ENCODE measurements at regions of chr12 and their contacts with region 1.

Region 1: GRCh38 chr12:105843986-105844760 is 294.6 kb downstream of the NUAK1 start:
- DNase-seq: no peak
- H3K4me3 ChIP-seq: no peak overlapping the region
- H3K27ac ChIP-seq: no peak overlapping the region
- H3K4me1 ChIP-seq: no peaks in the 10 kb centered on the region
- H3K27me3 ChIP-seq: no peaks in the 10 kb centered on the region
- CTCF ChIP-seq: no peak
- EP300 ChIP-seq: no peak
- POLR2A ChIP-seq: no peak

Region 2: DNA sequence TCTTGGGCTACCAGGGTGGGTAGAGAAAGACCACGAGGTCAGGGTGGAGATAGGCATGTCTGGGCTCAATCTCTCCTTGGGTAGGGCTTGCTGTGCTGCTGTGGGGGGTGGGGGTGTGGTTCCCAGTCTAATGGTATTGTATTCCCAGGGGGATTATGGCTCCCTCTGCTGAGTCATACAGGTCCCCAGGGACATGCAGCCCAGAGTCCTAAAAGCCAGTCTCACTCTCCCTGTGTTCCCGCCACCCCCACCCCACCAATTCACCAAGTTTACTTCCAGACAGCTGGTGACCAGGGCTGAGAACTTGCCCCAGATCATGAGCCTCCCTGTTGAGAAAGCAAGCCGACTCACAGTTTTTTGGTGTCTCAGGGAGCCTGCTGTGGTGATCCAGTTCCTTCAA is 146.1 kb before region 1 on chr12:
- intact Hi-C with region 1: no loop called
- DNase-seq: no peak
- H3K4me3 ChIP-seq: no peak overlapping the region
- H3K27ac ChIP-seq: no peak overlapping the region
- H3K4me1 ChIP-seq: no peaks in the 10 kb centered on the region
- H3K27me3 ChIP-seq: no peaks in the 10 kb centered on the region
- CTCF ChIP-seq: no peak
- EP300 ChIP-seq: no peak
- POLR2A ChIP-seq: no peak

Region 3: GRCh38 chr12:105820429-105821140 is 23.6 kb before region 1 on chr12:
- intact Hi-C with region 1: loop called in 1 of 4 experiments (anchors 1 kb)
- DNase-seq: peak in 4 of 5 donors; percentile 17 to 65 (median 33)
- H3K4me3 ChIP-seq: no peak overlapping the region
- H3K27ac ChIP-seq: no peak overlapping the region
- H3K4me1 ChIP-seq: peaks cover 2% of the 10 kb centered on the region
- H3K27me3 ChIP-seq: no peaks in the 10 kb centered on the region
- CTCF ChIP-seq: no peak
- EP300 ChIP-seq: no peak
- POLR2A ChIP-seq: no peak

Region 4: DNA sequence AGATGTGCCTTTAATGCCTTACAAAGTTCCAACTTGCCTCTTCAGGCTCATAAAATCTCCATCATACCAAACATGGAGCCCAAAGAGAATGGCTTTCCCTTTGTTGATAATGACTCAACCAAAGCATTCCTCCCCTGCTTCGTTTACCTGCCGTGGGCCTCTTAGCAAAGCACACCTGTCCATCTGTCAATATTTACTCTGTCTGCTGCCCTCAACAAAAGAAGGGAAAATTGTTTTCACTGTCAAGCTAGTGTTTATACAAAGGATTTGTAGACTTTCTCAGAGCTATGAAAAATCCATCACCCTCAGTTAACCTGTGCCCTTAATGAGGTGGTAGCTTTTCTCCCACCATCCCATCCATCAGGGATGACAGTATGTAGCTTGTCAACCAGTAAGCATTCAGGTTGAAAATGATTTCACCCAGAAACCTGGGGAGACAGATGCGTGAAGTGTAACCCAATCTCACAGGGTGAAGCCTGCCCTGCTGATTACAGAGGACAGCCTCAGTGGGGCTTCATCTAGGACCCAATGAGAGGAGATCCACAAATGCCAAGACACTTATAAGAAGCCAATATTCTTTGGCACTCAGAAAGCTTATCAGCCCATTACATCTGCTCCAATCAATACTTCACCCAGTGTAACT is 16.5 kb after region 1 on chr12:
- intact Hi-C with region 1: no loop called
- DNase-seq: no peak
- H3K4me3 ChIP-seq: no peak overlapping the region
- H3K27ac ChIP-seq: no peak overlapping the region
- H3K4me1 ChIP-seq: no peaks in the 10 kb centered on the region
- H3K27me3 ChIP-seq: no peaks in the 10 kb centered on the region
- CTCF ChIP-seq: no peak
- EP300 ChIP-seq: no peak
- POLR2A ChIP-seq: no peak

Region 5: GRCh38 chr12:105954951-105955931 is 111.1 kb after region 1 on chr12:
- intact Hi-C with region 1: loop called in 1 of 4 experiments (anchors 10 kb)
- DNase-seq: no peak
- H3K4me3 ChIP-seq: no peak overlapping the region
- H3K27ac ChIP-seq: no peak overlapping the region
- H3K4me1 ChIP-seq: no peaks in the 10 kb centered on the region
- H3K27me3 ChIP-seq: no peaks in the 10 kb centered on the region
- CTCF ChIP-seq: no peak
- EP300 ChIP-seq: no peak
- POLR2A ChIP-seq: no peak